PC-9 (cell line): ENCODE measurements at regions of chr12 and their contacts with region 1.

Region 1: GRCh38 chr12:117367011-117367638 is 5.7 kb upstream of the NOS1 start:
- DNase-seq: peak; percentile 50 to 63
- H3K4me3 ChIP-seq: no peak overlapping the region
- H3K27ac ChIP-seq: no peak overlapping the region
- H3K4me1 ChIP-seq: no peaks in the 10 kb centered on the region
- H3K27me3 ChIP-seq: peaks cover 37% of the 10 kb centered on the region
- CTCF ChIP-seq: peak; percentile 94

Region 2: DNA sequence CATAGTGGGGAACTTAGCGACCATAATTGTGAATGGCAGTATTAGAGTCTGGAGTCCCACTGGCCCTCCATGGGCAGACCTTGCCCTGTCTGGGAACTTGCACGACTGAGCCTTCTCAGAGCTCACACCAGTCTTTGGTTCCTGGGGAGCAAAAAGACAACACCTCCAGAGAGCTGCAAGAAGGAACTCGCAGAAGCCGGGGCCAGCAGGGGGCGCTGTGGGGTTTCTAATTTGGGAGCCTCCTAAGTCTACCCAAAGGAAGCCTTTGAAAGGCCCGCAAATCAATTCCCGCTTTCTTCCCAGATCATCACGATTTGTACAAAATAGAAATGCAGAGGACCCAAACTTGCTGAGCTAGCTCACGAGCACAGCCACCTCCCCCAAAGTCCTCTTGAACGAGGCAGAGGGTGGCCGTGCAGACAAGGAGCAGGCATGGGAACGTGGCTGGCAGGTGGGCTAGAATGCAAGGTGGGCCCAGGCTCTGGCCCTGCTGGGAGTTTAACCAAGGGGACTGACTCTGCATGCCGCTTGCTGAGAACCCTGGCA is 130.6 kb before region 1 on chr12:
- CTCF ChIA-PET with region 1: no interaction called
- POLR2A ChIA-PET with region 1: no interaction called
- intact Hi-C with region 1: loop called (anchors 10 kb)
- DNase-seq: peak; percentile 53 to 58
- H3K4me3 ChIP-seq: no peak overlapping the region
- H3K27ac ChIP-seq: no peak overlapping the region
- H3K4me1 ChIP-seq: no peaks in the 10 kb centered on the region
- H3K27me3 ChIP-seq: peaks cover 90% of the 10 kb centered on the region
- CTCF ChIP-seq: peak; percentile 88

Region 3: DNA sequence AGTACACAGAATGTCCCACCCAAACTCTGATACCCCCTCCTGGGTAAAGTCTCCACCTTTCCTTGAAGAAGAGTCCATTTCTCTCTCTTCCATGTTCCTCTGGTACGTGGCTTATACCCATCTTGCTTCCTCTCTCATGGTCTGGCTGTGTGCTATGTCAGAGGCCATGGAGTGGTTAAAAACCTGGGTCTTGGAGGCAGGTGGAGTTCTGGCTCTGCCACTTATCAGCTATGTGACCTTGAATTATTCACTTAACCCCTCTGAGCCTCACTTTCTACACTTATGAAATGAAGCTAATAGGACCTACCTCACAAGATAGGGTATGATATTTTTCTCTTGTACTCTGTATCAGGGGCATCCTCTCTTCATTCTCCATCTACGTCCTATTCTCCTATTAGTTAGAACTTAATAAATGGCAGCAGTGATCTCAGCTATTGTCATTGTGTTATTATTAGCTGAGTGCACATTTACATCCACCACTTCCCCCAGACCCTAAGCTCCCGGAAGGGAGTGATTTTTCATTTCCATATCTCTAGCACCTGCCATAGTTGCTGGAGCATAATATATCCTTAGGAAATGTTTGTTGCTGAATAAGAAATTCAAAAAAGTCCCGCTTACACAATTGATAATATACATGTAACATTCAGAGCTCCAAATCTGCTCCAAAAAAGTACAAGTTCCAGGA is 54.1 kb after region 1 on chr12:
- CTCF ChIA-PET with region 1: no interaction called
- POLR2A ChIA-PET with region 1: no interaction called
- intact Hi-C with region 1: no loop called
- DNase-seq: no peak
- H3K4me3 ChIP-seq: no peak overlapping the region
- H3K27ac ChIP-seq: no peak overlapping the region
- H3K4me1 ChIP-seq: no peaks in the 10 kb centered on the region
- H3K27me3 ChIP-seq: peaks cover 34% of the 10 kb centered on the region
- CTCF ChIP-seq: no peak

Region 4: DNA sequence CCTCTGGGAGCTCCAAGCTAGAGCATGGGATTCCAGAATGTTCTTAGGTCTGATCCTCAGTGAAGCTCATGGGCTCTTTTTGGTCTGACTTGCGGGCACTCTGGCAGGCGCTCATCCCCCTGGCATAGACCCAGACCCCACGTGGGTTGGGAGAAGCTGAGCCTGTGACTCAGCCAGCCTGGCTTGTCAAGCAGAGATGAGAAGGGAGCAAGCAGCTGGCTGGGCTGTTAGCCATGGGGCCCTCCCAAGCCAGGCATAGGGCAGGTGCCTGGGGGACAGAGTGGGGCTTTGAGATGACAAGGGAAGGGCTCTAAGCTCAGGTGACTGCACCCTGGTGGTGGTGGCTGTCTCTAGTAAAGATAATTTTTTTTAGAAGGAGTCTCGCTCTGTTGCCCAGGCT is 74.6 kb after region 1 on chr12:
- CTCF ChIA-PET with region 1: no interaction called
- POLR2A ChIA-PET with region 1: no interaction called
- intact Hi-C with region 1: no loop called
- DNase-seq: no peak
- H3K4me3 ChIP-seq: no peak overlapping the region
- H3K27ac ChIP-seq: no peak overlapping the region
- H3K4me1 ChIP-seq: no peaks in the 10 kb centered on the region
- H3K27me3 ChIP-seq: peaks cover 82% of the 10 kb centered on the region
- CTCF ChIP-seq: no peak

Region 5: DNA sequence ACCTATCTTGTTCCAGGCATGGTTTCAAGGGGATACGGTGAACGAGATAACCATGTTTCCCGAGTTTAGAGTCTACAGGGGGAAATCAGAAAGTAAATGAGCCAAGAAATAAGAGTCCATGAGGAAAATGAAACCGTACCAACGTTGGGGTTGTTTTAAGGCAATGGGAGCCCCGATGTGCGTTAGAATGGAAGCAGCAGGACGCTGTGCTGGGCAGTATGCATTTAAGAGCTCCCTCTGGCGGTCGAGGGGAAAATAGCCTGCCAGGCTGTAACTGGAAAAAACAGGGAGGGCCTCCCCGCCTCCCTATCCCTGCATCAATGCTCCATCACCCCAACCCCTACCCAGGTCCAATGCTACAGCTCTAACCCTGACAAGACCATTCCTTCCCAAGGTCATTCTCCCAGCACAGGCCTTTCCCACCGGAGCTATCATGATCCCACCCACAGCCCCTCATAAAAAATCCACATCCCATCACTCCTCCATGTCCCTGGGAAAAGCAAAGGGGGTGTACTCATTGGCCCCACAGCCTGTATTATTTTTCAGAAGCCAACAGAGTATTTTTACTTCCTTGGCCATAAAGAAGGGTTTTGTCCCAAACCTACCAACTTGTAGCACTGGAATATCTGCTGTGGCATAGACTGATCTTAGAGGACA is 220.6 kb after region 1 on chr12:
- CTCF ChIA-PET with region 1: interaction called, 8 read pairs
- POLR2A ChIA-PET with region 1: no interaction called
- intact Hi-C with region 1: loop called (anchors 1 kb)
- DNase-seq: peak in 1 of 2 experiments; percentile 31
- H3K4me3 ChIP-seq: no peak overlapping the region
- H3K27ac ChIP-seq: no peak overlapping the region
- H3K4me1 ChIP-seq: no peaks in the 10 kb centered on the region
- H3K27me3 ChIP-seq: peaks cover 31% of the 10 kb centered on the region
- CTCF ChIP-seq: peak; percentile 85

Region 6: GRCh38 chr12:117671734-117672133 is 304.6 kb after region 1 on chr12:
- CTCF ChIA-PET with region 1: no interaction called
- POLR2A ChIA-PET with region 1: no interaction called
- intact Hi-C with region 1: loop called (anchors 5 kb)
- DNase-seq: peak in 1 of 2 experiments; percentile 21
- H3K4me3 ChIP-seq: no peak overlapping the region
- H3K27ac ChIP-seq: no peak overlapping the region
- H3K4me1 ChIP-seq: no peaks in the 10 kb centered on the region
- H3K27me3 ChIP-seq: peaks cover 38% of the 10 kb centered on the region
- CTCF ChIP-seq: peak; percentile 60

Region 7: GRCh38 chr12:117836999-117837736 is 470.0 kb after region 1 on chr12:
- CTCF ChIA-PET with region 1: interaction called, 7 read pairs
- POLR2A ChIA-PET with region 1: no interaction called
- intact Hi-C with region 1: loop called (anchors 1 kb)
- DNase-seq: peak; percentile 66 to 69
- H3K4me3 ChIP-seq: no peak overlapping the region
- H3K27ac ChIP-seq: no peak overlapping the region
- H3K4me1 ChIP-seq: no peaks in the 10 kb centered on the region
- H3K27me3 ChIP-seq: 0 out of 2 replicates have a peak, but pooled peaks cover 5% of the 10 kb centered on the region
- CTCF ChIP-seq: peak; percentile 99

Region 8: GRCh38 chr12:117850048-117850447 is 482.9 kb after region 1 on chr12:
- CTCF ChIA-PET with region 1: interaction called, 7 read pairs
- POLR2A ChIA-PET with region 1: no interaction called
- intact Hi-C with region 1: loop called (anchors 1 kb)
- DNase-seq: peak in 1 of 2 experiments; percentile 36
- H3K4me3 ChIP-seq: no peak overlapping the region
- H3K27ac ChIP-seq: no peak overlapping the region
- H3K4me1 ChIP-seq: peaks cover 18% of the 10 kb centered on the region
- H3K27me3 ChIP-seq: no peaks in the 10 kb centered on the region
- CTCF ChIP-seq: peak; percentile 88